PC-9 (cell line): ENCODE measurements at regions of chr13 and their contacts with region 1.

Region 1: GRCh38 chr13:25930653-25931052 is 121.2 kb downstream of the SHISA2 start:
- DNase-seq: no peak
- H3K4me3 ChIP-seq: no peak overlapping the region
- H3K27ac ChIP-seq: no peak overlapping the region
- H3K4me1 ChIP-seq: no peaks in the 10 kb centered on the region
- H3K27me3 ChIP-seq: peaks cover 72% of the 10 kb centered on the region
- CTCF ChIP-seq: no peak

Region 2: DNA sequence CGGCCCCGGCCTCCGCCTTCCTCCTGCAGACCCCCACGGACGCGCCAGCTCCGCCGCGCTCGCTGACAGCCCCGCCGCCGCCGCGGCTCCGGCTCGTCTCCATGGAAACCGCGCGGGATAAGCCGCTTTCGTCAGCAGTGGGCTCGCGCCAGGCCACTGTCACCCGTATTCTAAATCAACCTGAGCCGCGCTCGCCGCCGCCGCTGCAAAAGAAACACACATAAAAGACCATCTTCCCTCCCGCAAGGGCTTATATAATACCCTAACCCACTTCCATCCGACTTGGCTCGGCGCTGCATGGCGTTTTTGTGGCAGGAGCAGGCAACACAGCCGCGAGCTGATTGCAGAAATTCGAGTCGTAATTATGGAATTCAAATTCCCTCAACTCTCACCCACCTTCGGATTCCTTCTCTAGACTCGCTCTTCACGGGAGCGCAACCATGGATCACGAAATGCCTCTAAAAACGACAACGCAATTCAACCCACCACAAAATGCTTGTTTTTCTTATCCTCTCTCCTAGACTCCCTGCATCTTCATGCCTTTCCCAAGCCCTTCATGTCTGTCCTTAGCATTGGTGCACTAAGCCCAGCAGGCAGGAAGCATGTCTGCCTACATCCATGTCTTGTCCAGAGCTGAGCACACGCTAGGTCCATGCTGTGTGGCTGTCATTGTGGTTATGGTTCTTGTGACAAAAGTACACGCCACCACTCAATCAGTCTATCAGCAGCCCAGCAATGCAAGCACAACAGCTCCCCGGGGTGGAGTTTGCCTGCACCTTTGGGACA is 758.9 kb before region 1 on chr13 and contains the start of gene AMER2:
- CTCF ChIA-PET with region 1: no interaction called
- POLR2A ChIA-PET with region 1: no interaction called
- intact Hi-C with region 1: loop called (anchors 10 kb)
- DNase-seq: no peak
- H3K4me3 ChIP-seq: no peak within 1 kb of the TSS
- H3K27ac ChIP-seq: no peak within 1 kb of the TSS
- H3K4me1 ChIP-seq: no peaks in the 10 kb centered on the region
- H3K27me3 ChIP-seq: peaks cover 55% of the 10 kb centered on the region
- CTCF ChIP-seq: no peak
- total RNA-seq, gene AMER2: not detected in 2 replicates

Region 3: GRCh38 chr13:26051657-26052311 is 121.1 kb after region 1 on chr13 and contains the start of gene SHISA2:
- CTCF ChIA-PET with region 1: no interaction called
- POLR2A ChIA-PET with region 1: no interaction called
- intact Hi-C with region 1: no loop called
- DNase-seq: no peak
- H3K4me3 ChIP-seq: no peak within 1 kb of the TSS
- H3K27ac ChIP-seq: no peak within 1 kb of the TSS
- H3K4me1 ChIP-seq: no peaks in the 10 kb centered on the region
- H3K27me3 ChIP-seq: peaks cover 31% of the 10 kb centered on the region
- CTCF ChIP-seq: no peak
- total RNA-seq, gene SHISA2: not detected in 2 replicates